ENCODE measurements at regions of chr5 and their contacts with region 1.

Region 1: DNA sequence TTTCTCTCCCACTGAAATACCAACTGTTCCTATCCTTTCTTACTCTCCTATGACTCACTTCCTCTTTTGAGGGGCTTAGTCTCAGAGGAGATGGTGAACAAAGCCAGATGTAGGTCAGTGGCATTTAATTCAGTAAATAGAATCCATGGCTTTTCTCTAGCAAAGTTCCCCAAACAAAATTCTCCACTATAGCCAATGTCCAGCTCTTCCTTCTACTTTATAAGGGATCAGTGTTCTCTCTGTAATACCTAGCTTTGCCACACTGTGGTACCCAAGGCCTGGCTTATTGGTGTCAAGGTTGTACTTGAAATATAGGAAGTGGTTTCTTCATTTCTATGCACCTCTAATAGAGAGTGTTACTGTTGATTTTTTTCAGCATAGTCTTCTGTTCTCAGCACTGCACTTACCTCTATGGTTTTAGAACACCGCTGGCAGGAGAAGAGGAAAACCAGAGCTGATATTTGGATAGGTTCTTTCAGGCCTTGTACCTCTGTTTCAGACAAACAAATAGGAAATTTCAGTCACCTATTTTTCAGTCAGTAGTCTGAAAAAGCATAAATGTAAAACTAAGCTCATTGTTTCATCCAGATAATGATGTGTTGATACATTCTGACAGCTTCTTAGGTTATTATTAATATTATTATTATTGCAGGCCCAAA is 40.6 kb upstream of the ITGA2 start:
- DNase-seq: peak; percentile 19 to 66 (median 42)
- H3K4me3 ChIP-seq: no peak overlapping the region
- H3K4me3 Mint-ChIP-seq: no peak overlapping the region
- H3K27ac ChIP-seq: no peak overlapping the region
- H3K27ac Mint-ChIP-seq: no peak overlapping the region
- H3K4me1 ChIP-seq: no peaks in the 10 kb centered on the region
- H3K4me1 Mint-ChIP-seq: peaks cover 11% of the 10 kb centered on the region
- H3K27me3 ChIP-seq: no peaks in the 10 kb centered on the region
- H3K27me3 Mint-ChIP-seq: peaks cover 0 to 3% (median 0%) of the 10 kb centered on the region in 3 donors
- CTCF ChIP-seq: peak; percentile 58

Region 2: DNA sequence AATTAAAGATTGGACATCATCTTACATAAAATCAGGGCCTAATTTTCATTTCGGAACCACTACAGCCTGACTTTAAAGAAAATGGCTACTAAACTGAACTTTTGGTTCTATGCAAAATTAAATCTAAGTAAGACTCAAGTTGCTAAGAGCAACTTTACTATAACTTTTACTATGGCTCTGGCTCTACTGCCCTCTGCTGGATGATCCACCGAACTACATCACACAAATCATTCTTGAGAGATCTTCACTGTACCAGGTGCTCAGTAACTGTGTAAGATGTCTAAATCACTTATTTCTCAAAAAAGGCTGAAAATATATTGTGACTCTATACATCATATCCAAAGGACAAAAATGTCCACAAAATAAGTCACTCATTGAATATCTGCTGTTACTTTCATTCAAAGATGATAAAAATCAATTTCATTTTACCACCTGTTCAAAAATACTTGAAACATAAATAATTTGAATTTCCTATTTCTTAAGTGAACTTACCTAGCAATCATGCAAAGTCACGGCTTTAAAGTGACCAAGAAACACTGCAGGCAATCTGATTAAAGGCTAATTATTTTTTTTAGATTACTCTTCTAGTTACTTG is 147.5 kb after region 1 on chr5:
- intact Hi-C with region 1: loop called (anchors 5 to 10 kb)
- DNase-seq: peak; percentile 23 to 68 (median 45)
- H3K4me3 ChIP-seq: no peak overlapping the region
- H3K4me3 Mint-ChIP-seq: no peak overlapping the region
- H3K27ac ChIP-seq: no peak overlapping the region
- H3K27ac Mint-ChIP-seq: no peak overlapping the region
- H3K4me1 ChIP-seq: no peaks in the 10 kb centered on the region
- H3K4me1 Mint-ChIP-seq: no peaks in the 10 kb centered on the region
- H3K27me3 ChIP-seq: no peaks in the 10 kb centered on the region
- H3K27me3 Mint-ChIP-seq: no peaks in the 10 kb centered on the region
- CTCF ChIP-seq: peak; percentile 93